CD8-positive, alpha-beta T cell (primary cell): ENCODE measurements at regions of chr17 and their contacts with region 1.

Region 1: GRCh38 chr17:7823581-7824397 is 10.2 kb upstream of the KDM6B start:
- DNase-seq: no peak
- ATAC-seq: no peak
- H3K4me3 ChIP-seq: no peak overlapping the region
- H3K4me3 Mint-ChIP-seq: no peak overlapping the region
- H3K27ac ChIP-seq: no peak overlapping the region
- H3K27ac Mint-ChIP-seq: no peak overlapping the region
- H3K4me1 ChIP-seq: no peaks in the 10 kb centered on the region
- H3K4me1 Mint-ChIP-seq: no peaks in the 10 kb centered on the region
- H3K27me3 ChIP-seq: no peaks in the 10 kb centered on the region
- H3K27me3 Mint-ChIP-seq: no peaks in the 10 kb centered on the region
- CTCF ChIP-seq: no peak

Region 2: GRCh38 chr17:7729816-7730215 is 94.0 kb before region 1 on chr17:
- CTCF ChIA-PET with region 1: no interaction called
- POLR2A ChIA-PET with region 1: no interaction called
- intact Hi-C with region 1: loop called in 1 of 2 experiments (anchors 5 kb)
- DNase-seq: no peak
- ATAC-seq: no peak
- H3K4me3 ChIP-seq: no peak overlapping the region
- H3K4me3 Mint-ChIP-seq: no peak overlapping the region
- H3K27ac ChIP-seq: no peak overlapping the region
- H3K27ac Mint-ChIP-seq: no peak overlapping the region
- H3K4me1 ChIP-seq: no peaks in the 10 kb centered on the region
- H3K4me1 Mint-ChIP-seq: no peaks in the 10 kb centered on the region
- H3K27me3 ChIP-seq: no peaks in the 10 kb centered on the region
- H3K27me3 Mint-ChIP-seq: peaks cover 11% of the 10 kb centered on the region
- CTCF ChIP-seq: no peak

Region 3: GRCh38 chr17:7745748-7746470 is 77.9 kb before region 1 on chr17:
- CTCF ChIA-PET with region 1: no interaction called
- POLR2A ChIA-PET with region 1: no interaction called
- intact Hi-C with region 1: loop called in 1 of 2 experiments (anchors 5 kb)
- DNase-seq: no peak
- ATAC-seq: no peak
- H3K4me3 ChIP-seq: no peak overlapping the region
- H3K4me3 Mint-ChIP-seq: no peak overlapping the region
- H3K27ac ChIP-seq: no peak overlapping the region
- H3K27ac Mint-ChIP-seq: no peak overlapping the region
- H3K4me1 ChIP-seq: no peaks in the 10 kb centered on the region
- H3K4me1 Mint-ChIP-seq: no peaks in the 10 kb centered on the region
- H3K27me3 ChIP-seq: no peaks in the 10 kb centered on the region
- H3K27me3 Mint-ChIP-seq: peaks cover 16% of the 10 kb centered on the region
- CTCF ChIP-seq: no peak

Region 4: DNA sequence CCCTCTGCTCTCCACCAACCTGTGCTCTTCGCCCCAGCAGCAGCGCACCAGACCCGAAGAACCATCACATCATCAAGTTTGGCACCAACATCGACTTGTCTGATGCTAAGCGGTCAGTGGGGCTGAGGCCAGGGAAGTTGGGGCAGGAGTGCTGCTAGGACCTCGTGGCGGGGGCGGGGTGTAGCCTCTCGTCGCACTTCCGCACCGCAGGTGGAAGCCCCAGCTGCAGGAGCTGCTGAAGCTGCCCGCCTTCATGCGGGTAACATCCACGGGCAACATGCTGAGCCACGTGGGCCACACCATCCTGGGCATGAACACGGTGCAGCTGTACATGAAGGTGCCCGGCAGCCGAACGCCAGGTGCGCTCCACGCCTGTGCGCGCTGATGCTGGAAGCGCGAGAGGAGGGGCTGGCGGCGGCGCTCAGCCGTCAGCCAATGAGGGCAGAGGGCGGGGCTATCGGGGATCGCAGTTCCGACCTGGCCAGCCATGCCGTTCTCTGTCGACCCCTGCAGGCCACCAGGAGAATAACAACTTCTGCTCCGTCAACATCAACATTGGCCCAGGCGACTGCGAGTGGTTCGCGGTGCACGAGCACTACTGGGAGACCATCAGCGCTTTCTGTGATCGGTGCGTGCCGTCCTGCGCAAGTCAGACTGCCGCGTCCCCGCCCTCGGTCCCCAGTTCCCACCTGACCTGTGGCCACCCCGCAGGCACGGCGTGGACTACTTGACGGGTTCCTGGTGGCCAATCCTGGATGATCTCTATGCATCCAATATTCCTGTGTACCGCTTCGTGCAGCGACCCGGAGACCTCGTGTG is 27.9 kb after region 1 on chr17:
- CTCF ChIA-PET with region 1: interaction called, 26 read pairs
- POLR2A ChIA-PET with region 1: interaction called, 3 read pairs
- intact Hi-C with region 1: loop called (anchors 1 kb)
- DNase-seq: peak; percentile 90 to 98 (median 96)
- ATAC-seq: peak; percentile 84
- H3K4me3 ChIP-seq: peak overlapping the region; percentile 44 to 58
- H3K4me3 Mint-ChIP-seq: peak overlapping the region; percentile 68
- H3K27ac ChIP-seq: peak overlapping the region; percentile 53 to 54
- H3K27ac Mint-ChIP-seq: peak overlapping the region; percentile 91
- H3K4me1 ChIP-seq: peaks cover 27% of the 10 kb centered on the region
- H3K4me1 Mint-ChIP-seq: peaks cover 22% of the 10 kb centered on the region
- H3K27me3 ChIP-seq: no peaks in the 10 kb centered on the region
- H3K27me3 Mint-ChIP-seq: no peaks in the 10 kb centered on the region
- CTCF ChIP-seq: peak; percentile 97